B cell (primary cell): ENCODE measurements at regions of chr1 and their contacts with region 1.

Region 1: GRCh38 chr1:212608209-212608955 is at the start of gene ATF3:
- DNase-seq: peak; percentile 91
- ATAC-seq: peak; percentile 80
- H3K4me3 ChIP-seq: peak within 1 kb of the TSS; percentile 53 to 76 (median 72)
- H3K4me3 Mint-ChIP-seq: peak within 1 kb of the TSS; percentile 97
- H3K27ac ChIP-seq: peak within 1 kb of the TSS in 1 of 2 donors; percentile 54
- H3K27ac Mint-ChIP-seq: peak within 1 kb of the TSS; percentile 87
- H3K4me1 ChIP-seq: peaks cover 28 to 32% of the 10 kb centered on the region in 2 donors
- H3K4me1 Mint-ChIP-seq: peaks cover 28% of the 10 kb centered on the region
- H3K27me3 ChIP-seq: peaks cover 0 to 63% (median 36%) of the 10 kb centered on the region in 4 experiments
- H3K27me3 Mint-ChIP-seq: peaks cover 52% of the 10 kb centered on the region
- CTCF ChIP-seq: no peak
- total RNA-seq, gene ATF3: 2.7 and 4.5 TPM in 2 replicates

Region 2: DNA sequence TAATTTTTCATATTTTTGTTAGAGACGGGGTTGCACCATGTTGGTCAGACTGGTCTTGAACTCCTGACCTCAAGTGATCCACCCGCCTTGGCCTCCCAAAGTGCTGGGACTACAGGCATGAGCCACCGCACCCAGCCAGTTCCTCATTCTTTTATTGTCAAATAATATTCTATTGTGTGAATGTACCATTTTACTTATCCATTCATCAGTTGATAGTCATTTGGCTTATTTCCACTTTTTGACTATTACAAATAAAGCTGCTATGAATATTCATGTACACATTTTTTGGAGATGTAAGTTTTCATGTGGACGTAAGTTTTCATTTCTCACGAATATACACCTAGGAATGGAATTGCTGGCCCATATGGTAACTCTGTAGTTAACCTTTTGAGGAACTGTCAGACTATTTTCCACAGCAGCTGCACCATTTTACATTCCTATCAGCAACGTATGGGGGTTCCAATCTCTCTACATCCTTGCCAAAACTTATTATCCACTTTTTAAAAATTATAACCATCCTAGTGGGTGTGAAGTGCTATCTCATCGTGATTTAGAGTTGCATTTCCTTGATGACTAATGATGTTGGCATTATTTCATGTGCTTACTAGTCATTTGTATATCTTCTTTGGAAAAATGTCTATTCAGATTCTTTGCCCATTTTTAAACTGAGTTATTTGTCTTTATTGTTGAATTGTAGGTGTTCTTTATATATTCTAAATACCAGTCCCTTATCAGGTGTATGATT is 206.4 kb before region 1 on chr1:
- CTCF ChIA-PET with region 1: no interaction called
- POLR2A ChIA-PET with region 1: no interaction called
- intact Hi-C with region 1: no loop called
- DNase-seq: no peak
- ATAC-seq: no peak
- H3K4me3 ChIP-seq: no peak overlapping the region
- H3K4me3 Mint-ChIP-seq: no peak overlapping the region
- H3K27ac ChIP-seq: no peak overlapping the region
- H3K27ac Mint-ChIP-seq: no peak overlapping the region
- H3K4me1 ChIP-seq: no peaks in the 10 kb centered on the region
- H3K4me1 Mint-ChIP-seq: peaks cover 6% of the 10 kb centered on the region
- H3K27me3 ChIP-seq: no peaks in the 10 kb centered on the region
- H3K27me3 Mint-ChIP-seq: no peaks in the 10 kb centered on the region
- CTCF ChIP-seq: no peak

Region 3: DNA sequence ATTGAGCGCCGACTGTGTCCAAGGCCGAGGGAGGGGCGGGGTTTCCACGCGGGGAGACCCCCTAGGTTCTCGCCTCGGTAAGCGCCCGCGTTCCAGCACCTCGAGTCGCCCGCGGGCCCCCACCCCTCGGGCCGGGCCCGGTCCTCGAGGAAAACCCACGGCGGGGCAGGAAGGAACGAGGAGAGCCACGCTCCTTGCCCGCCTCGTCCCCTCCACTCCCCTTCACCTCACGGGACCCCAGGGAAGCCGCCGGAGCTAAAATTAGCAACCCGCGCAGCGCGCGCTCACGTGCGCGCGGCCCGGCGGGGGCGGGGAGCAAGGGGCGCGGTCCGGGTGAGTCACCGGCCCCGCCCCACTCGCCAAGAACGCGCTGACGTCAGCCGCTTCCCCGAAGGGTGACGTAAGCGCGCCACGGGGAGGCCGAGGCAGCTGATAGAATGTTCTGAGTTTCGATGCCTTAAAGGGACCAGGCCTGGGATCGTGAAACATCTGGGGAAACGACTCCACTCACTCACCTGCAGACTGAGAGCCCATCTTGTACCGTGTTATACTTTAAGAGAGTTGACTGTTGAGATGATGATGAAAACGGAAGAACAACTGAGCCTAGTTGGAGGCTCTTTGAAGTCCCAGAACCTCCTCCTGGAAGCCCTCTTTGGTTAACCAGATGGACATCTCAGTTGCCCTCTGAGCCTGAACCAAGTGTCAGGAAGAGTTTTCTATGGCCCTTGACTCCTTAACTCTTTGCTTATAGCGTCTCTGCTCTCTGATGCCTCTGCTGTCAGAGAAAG is 49.5 kb before region 1 on chr1:
- CTCF ChIA-PET with region 1: no interaction called
- POLR2A ChIA-PET with region 1: interaction called, 4 read pairs
- intact Hi-C with region 1: loop called (anchors 2 kb)
- DNase-seq: peak; percentile 97
- ATAC-seq: peak; percentile 92
- H3K4me3 ChIP-seq: peak overlapping the region; percentile 36 to 89 (median 73)
- H3K4me3 Mint-ChIP-seq: peak overlapping the region; percentile 90
- H3K27ac ChIP-seq: peak overlapping the region; percentile 95 to 96
- H3K27ac Mint-ChIP-seq: peak overlapping the region; percentile 96
- H3K4me1 ChIP-seq: peaks cover 12% of the 10 kb centered on the region in 2 donors
- H3K4me1 Mint-ChIP-seq: peaks cover 13% of the 10 kb centered on the region
- H3K27me3 ChIP-seq: peaks cover 0 to 5% (median 0%) of the 10 kb centered on the region in 4 experiments
- H3K27me3 Mint-ChIP-seq: peaks cover 4% of the 10 kb centered on the region
- CTCF ChIP-seq: no peak

Region 4: DNA sequence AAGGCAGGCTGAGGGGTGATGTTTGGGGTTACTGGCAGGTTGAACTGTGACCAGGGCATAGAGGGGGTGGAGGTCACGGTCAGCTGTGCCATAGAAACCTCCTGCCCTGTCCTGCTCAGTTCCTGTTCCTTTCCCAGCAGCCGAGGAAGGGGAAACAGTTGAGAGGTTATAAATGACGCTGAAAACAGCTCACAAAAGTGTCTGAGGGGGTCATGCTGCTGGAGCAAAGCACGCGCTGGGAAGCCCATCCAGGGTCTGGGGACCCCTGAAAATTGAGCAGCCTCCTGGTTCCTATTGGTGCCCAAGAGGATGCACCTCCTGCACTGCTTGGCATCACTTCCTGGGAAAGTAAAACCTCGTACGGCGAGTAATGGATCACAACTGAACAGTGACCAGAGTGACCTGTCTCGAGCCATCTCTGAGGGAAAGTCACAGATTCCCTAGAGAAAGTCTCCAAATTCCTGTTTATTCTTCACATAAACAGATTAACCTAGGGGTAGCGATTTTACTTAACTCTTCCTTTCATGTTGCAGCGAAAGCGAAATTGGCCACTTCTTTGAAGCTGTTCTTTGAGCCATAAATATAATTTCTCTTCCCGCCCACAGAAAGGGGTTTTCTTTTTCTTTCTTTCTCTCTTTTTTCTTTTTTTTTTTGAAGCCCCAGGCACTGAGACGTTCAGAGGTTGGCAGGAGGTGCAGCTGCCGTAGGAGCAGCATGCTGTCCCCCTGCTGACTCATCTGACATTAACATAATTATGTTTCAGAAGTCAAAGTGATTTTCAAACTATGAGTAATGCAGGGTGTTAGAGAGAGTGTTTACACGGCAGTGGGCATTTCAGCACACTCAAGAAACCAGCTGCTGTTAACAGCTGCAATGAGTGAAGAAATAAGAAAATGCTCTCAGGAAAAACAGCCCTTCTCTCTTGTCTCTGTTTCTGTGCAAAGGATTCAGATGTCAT is 41.6 kb before region 1 on chr1:
- CTCF ChIA-PET with region 1: no interaction called
- POLR2A ChIA-PET with region 1: interaction called, 3 read pairs
- intact Hi-C with region 1: loop called (anchors 2 kb)
- DNase-seq: peak; percentile 54
- ATAC-seq: peak; percentile 97
- H3K4me3 ChIP-seq: peak overlapping the region; percentile 66 to 96 (median 84)
- H3K4me3 Mint-ChIP-seq: peak overlapping the region; percentile 90
- H3K27ac ChIP-seq: peak overlapping the region; percentile 21 to 49
- H3K27ac Mint-ChIP-seq: peak overlapping the region; percentile 90
- H3K4me1 ChIP-seq: peaks cover 5 to 14% of the 10 kb centered on the region in 2 donors
- H3K4me1 Mint-ChIP-seq: peaks cover 21% of the 10 kb centered on the region
- H3K27me3 ChIP-seq: no peaks in the 10 kb centered on the region
- H3K27me3 Mint-ChIP-seq: peaks cover 6% of the 10 kb centered on the region
- CTCF ChIP-seq: no peak

Region 5: DNA sequence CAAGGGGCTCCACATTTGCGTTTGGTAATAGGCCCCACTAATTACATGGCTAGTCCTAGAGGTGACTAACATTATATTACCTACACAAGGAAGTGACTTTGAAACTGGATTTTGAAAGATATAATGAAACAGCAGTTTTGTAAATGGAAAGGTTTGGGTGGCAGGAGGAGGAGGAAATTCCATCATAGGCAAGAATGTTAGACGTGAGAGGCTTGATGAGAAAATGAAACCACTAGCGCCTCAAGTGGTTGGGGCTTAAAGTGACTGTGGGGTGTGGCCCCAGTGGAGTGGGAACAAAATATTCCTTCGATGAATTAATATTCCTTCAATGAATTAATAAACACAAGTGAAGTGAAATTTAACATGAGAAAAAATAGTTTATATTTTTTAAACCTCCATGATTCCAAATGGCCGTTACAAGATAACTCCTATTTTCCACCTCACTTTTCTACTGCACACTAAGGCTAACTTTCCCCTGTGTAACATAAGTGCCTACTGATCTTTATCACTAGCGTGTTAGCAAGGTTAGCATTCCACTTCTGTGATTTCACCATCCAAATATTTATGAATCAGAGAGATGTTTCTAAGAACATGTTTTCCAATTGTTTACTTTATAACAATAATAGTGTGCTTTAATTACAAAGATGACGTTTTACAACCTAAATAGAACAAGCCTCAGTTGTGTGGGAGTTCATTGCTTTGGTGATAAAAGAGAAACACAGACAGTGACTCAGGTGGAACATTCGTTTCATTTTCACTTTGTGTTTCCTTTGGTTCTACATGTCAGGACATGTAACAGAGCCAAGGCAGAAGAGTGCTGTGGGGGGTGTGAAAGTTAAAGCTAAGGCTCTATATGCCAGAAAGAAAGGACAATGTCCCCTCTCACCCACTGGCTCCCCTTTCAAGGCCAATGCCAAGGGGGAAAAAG is 12.3 kb before region 1 on chr1:
- CTCF ChIA-PET with region 1: no interaction called
- POLR2A ChIA-PET with region 1: no interaction called
- intact Hi-C with region 1: loop called (anchors 1 kb)
- DNase-seq: peak; percentile 67
- ATAC-seq: peak; percentile 85
- H3K4me3 ChIP-seq: peak overlapping the region in 3 of 5 experiments; percentile 16 to 57 (median 19)
- H3K4me3 Mint-ChIP-seq: peak overlapping the region; percentile 74
- H3K27ac ChIP-seq: peak overlapping the region; percentile 44 to 72
- H3K27ac Mint-ChIP-seq: peak overlapping the region; percentile 80
- H3K4me1 ChIP-seq: peaks cover 11 to 12% of the 10 kb centered on the region in 2 donors
- H3K4me1 Mint-ChIP-seq: peaks cover 14% of the 10 kb centered on the region
- H3K27me3 ChIP-seq: peaks cover 0 to 2% (median under 1%) of the 10 kb centered on the region in 4 experiments
- H3K27me3 Mint-ChIP-seq: peaks cover 19% of the 10 kb centered on the region
- CTCF ChIP-seq: peak; percentile 40

Region 6: GRCh38 chr1:212630158-212630900 is 21.9 kb after region 1 on chr1:
- CTCF ChIA-PET with region 1: no interaction called
- POLR2A ChIA-PET with region 1: no interaction called
- intact Hi-C with region 1: loop called (anchors 2 kb)
- DNase-seq: peak; percentile 82
- ATAC-seq: peak; percentile 98
- H3K4me3 ChIP-seq: no peak overlapping the region
- H3K4me3 Mint-ChIP-seq: no peak overlapping the region
- H3K27ac ChIP-seq: no peak overlapping the region
- H3K27ac Mint-ChIP-seq: no peak overlapping the region
- H3K4me1 ChIP-seq: peaks cover 12 to 19% of the 10 kb centered on the region in 2 donors
- H3K4me1 Mint-ChIP-seq: peaks cover 9% of the 10 kb centered on the region
- H3K27me3 ChIP-seq: peaks cover 0 to 9% (median 1%) of the 10 kb centered on the region in 4 experiments
- H3K27me3 Mint-ChIP-seq: peaks cover 19% of the 10 kb centered on the region
- CTCF ChIP-seq: peak; percentile 86

Region 7: GRCh38 chr1:212699104-212699624 is 90.8 kb after region 1 on chr1:
- CTCF ChIA-PET with region 1: no interaction called
- POLR2A ChIA-PET with region 1: interaction called, 3 read pairs
- intact Hi-C with region 1: loop called (anchors 1 kb)
- DNase-seq: peak; percentile 69
- ATAC-seq: peak; percentile 65
- H3K4me3 ChIP-seq: peak overlapping the region; percentile 34 to 70 (median 65)
- H3K4me3 Mint-ChIP-seq: peak overlapping the region; percentile 92
- H3K27ac ChIP-seq: no peak overlapping the region
- H3K27ac Mint-ChIP-seq: peak overlapping the region; percentile 27
- H3K4me1 ChIP-seq: peaks cover 31 to 36% of the 10 kb centered on the region in 2 donors
- H3K4me1 Mint-ChIP-seq: peaks cover 39% of the 10 kb centered on the region
- H3K27me3 ChIP-seq: peaks cover 0 to 14% (median 3%) of the 10 kb centered on the region in 4 experiments
- H3K27me3 Mint-ChIP-seq: peaks cover 4% of the 10 kb centered on the region
- CTCF ChIP-seq: peak; percentile 69